Heart right ventricle (tissue), 16 donors: ENCODE measurements at regions of chr2 and their contacts with region 1.

Region 1: DNA sequence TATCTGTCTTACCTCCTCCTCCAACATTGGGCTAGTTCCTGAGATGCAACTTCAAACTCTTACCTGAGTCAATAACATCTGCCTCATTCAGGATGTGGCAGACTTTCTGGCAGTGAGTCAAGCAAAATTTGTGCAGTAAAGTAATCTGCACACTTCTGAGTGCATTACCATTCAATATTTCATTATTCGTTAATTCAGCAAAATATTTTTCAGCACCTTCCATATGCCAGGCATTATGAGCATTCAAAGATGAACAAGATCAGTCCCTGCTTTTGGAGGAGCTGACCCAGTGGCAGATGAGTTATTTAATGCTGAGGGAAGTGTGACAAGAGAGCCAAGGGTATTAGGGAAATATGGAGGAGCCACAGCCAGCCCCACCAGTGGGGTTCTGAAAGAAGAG is 339.7 kb downstream of the LNPK start:
- DNase-seq: no peak
- ATAC-seq: no peak
- H3K4me3 ChIP-seq: no peak overlapping the region
- H3K27ac ChIP-seq: no peak overlapping the region
- H3K4me1 ChIP-seq: no peaks in the 10 kb centered on the region
- H3K27me3 ChIP-seq: peaks cover 0 to 29% (median 4%) of the 10 kb centered on the region in 7 donors
- CTCF ChIP-seq: no peak

Region 2: DNA sequence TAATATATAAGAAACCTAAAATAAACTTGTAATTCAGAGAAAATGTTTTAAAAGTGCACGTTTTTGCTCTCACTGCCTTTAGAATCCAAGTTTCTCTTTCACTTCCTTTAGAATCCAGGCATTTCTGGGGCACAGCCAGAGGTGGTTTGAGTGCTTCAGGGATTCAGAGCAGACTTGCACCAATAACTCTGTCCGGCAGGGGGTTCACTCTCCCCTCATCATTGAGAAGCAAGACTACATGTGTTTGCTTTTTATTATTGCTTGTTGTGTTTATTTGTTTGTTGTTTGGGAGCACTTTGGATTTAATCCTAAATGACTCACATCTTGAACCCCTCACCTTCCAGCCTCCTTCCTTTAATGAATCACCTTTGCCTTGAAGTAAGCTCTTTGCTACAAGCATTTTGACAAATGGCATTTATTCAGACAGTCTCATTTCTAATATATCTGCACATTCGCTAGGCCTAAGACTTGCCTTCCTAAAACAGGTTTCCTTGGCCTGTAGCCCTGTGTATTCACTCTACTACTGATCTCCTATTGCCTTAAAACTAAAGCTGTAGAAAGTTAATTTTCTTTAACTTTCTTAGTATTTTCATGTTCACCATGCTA is 247.3 kb before region 1 on chr2:
- intact Hi-C with region 1: loop called in 1 of 10 experiments (anchors 10 kb)
- DNase-seq: peak; percentile 35 to 57
- ATAC-seq: peak in 2 of 8 donors; percentile 58 to 62
- H3K4me3 ChIP-seq: no peak overlapping the region
- H3K27ac ChIP-seq: no peak overlapping the region
- H3K4me1 ChIP-seq: peaks cover 0 to 7% (median 0%) of the 10 kb centered on the region in 9 donors
- H3K27me3 ChIP-seq: peaks cover 0 to 12% (median 0%) of the 10 kb centered on the region in 7 donors
- CTCF ChIP-seq: peak; percentile 21 to 73 (median 61)

Region 3: GRCh38 chr2:175500255-175500654 is 162.1 kb before region 1 on chr2:
- intact Hi-C with region 1: no loop called
- DNase-seq: no peak
- ATAC-seq: no peak
- H3K4me3 ChIP-seq: no peak overlapping the region
- H3K27ac ChIP-seq: no peak overlapping the region
- H3K4me1 ChIP-seq: no peaks in the 10 kb centered on the region
- H3K27me3 ChIP-seq: no peaks in the 10 kb centered on the region
- CTCF ChIP-seq: no peak

Region 4: GRCh38 chr2:176285321-176285720 is 623.0 kb after region 1 on chr2:
- intact Hi-C with region 1: no loop called
- DNase-seq: no peak
- ATAC-seq: no peak
- H3K4me3 ChIP-seq: no peak overlapping the region
- H3K27ac ChIP-seq: no peak overlapping the region
- H3K4me1 ChIP-seq: peaks cover 0 to 24% (median 10%) of the 10 kb centered on the region in 9 donors
- H3K27me3 ChIP-seq: no peaks in the 10 kb centered on the region
- CTCF ChIP-seq: no peak